ENCODE measurements at regions of chr10 and their contacts with region 1.

Region 1: DNA sequence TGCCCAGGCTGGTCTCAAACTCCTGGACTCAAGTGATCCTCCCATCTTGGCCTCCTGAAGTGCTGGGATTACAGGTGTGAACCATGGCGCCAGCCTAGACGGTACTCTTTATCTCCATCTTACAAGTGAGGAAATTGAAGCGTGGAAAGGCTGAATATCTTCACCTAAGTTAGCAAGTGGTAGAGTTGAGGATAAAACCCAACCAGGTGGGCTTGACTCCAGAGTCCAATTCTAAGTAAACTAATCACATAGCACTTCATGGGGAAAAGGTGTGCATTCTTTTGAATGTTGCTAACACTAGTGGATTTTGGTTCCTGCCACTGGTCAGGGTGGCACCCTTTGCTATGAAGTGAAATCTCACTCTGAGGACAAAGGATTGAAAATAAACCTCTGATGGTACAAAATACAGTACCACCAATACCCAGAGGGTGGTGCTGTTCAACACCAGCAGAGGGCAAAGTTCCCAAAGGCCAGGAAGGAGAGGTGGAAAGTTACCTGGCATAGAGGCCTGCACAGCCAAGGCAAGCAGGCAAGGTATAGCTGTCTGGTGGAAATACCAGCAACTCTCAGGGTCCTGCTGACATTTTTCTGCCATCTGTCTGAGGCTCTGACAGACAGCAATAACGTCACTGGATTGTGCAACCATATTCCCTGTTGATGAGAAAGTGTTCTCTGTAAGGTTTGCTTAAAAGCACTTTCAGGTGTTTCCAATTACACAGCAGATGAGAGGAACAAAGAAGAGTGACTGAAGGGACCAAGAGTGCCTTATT is 17.6 kb downstream of the ZDHHC16 start:
- DNase-seq: peak; percentile 50
- H3K4me3 ChIP-seq: no peak overlapping the region
- H3K27ac ChIP-seq: no peak overlapping the region
- H3K4me1 ChIP-seq: no peaks in the 10 kb centered on the region
- H3K27me3 ChIP-seq: no peaks in the 10 kb centered on the region
- CTCF ChIP-seq: peak; percentile 78 to 88 (median 85)
- POLR2A ChIP-seq: no peak

Region 2: DNA sequence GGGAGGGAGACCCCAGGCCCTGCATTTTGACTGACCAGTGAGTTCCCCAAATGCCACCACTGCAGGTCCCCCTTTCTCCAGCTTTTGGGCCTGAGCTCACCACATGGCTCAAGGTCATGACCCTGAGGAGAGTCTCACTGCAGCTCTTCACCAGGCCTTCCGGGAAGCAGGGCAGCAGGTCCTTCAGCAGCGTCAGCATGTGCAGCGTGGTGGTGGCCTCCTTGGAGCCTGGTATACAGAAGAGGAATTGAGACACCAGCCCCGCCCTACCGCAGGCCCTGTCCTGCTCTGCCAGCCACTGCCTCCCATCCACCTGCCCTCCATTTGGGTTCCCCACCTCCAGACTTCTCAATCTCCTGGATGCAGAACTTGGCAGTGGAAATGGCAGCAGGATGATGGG is 75.4 kb before region 1 on chr10:
- intact Hi-C with region 1: no loop called
- DNase-seq: no peak
- H3K4me3 ChIP-seq: no peak overlapping the region
- H3K27ac ChIP-seq: no peak overlapping the region
- H3K4me1 ChIP-seq: no peaks in the 10 kb centered on the region
- H3K27me3 ChIP-seq: no peaks in the 10 kb centered on the region
- CTCF ChIP-seq: no peak
- POLR2A ChIP-seq: no peak

Region 3: GRCh38 chr10:97543025-97543575 is 79.6 kb after region 1 on chr10:
- intact Hi-C with region 1: loop called (anchors 10 kb)
- DNase-seq: peak; percentile 66
- H3K4me3 ChIP-seq: no peak overlapping the region
- H3K27ac ChIP-seq: peak overlapping the region; percentile 61 to 91
- H3K4me1 ChIP-seq: peaks cover 61% of the 10 kb centered on the region
- H3K27me3 ChIP-seq: no peaks in the 10 kb centered on the region
- CTCF ChIP-seq: no peak
- POLR2A ChIP-seq: no peak

Region 4: DNA sequence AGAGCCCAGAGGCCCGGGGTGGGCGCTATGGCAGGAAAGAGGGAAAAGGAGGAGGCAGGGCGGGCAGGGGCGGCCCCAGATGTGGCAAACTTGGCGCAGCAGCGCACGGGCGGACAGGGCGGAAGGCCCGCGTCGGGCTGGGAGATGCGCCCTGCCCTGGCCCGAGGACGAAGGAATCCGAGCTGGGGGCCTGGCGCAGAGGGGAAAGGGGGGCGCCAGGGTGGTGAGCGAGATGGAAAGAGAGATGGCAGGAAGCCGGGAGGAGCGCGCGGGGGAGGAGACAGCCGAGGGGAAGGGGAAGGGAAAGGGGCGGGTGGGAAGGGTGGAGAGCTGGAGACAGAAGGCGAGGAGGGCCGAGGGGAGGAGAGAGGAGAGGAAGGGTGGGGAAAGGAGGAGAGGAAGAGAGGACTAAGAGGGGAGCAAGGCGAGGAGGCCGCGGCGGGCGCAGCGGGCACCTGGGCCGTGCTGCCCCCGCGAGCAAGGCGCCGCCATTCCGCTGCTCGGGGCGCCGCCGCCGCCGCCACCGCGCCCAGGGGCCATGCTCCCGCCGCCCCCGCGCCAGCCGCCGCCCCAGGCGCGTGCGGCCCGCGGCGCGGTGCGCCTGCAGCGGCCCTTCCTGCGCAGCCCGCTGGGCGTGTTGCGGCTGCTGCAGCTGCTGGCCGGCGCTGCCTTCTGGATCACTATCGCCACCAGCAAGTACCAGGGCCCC is 249.9 kb after region 1 on chr10 and contains the start of gene MARVELD1:
- intact Hi-C with region 1: no loop called
- DNase-seq: peak; percentile 68
- H3K4me3 ChIP-seq: peak within 1 kb of the TSS; percentile 69 to 75
- H3K27ac ChIP-seq: peak within 1 kb of the TSS; percentile 97 to 98
- H3K4me1 ChIP-seq: peaks cover 23% of the 10 kb centered on the region
- H3K27me3 ChIP-seq: no peaks in the 10 kb centered on the region
- CTCF ChIP-seq: no peak
- POLR2A ChIP-seq: no peak
- total RNA-seq, gene MARVELD1: 8.7 to 13.6 TPM